Heart right ventricle (tissue), 16 donors: ENCODE measurements at regions of chrX and their contacts with region 1.

Region 1: DNA sequence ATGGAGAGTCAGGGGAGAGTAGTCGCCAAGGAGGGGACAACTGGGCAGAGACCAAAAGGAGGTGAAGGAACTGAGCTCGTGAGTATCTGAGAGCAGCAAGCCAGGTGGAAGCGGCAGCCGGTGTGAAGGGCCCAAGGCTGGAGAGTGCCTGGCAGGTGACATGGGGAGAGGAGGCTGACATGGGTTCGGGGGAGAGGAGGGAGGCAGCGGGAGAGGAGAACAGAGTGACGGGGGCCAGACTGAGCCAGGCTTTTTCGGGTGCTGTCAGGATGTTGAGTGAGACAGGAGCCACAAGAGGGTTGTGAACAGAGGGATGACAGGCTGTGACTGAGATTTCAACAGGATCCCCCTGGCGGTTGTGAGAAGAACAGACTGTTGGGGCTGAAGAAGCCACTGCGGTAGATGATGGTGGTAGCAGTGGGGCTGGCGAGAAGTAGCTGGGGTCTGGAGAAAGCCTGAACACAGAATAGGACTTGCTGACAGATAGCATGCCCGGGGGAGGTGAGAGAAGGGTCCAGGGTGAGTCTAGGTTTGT is 5.7 kb downstream of the ELK1 start:
- DNase-seq: no peak
- ATAC-seq: peak; percentile 42 to 88 (median 75)
- H3K4me3 ChIP-seq: no peak overlapping the region
- H3K27ac ChIP-seq: peak overlapping the region in 1 of 10 donors; percentile 22
- H3K4me1 ChIP-seq: peaks cover 0 to 32% (median 10%) of the 10 kb centered on the region in 9 donors
- H3K27me3 ChIP-seq: no peaks in the 10 kb centered on the region
- CTCF ChIP-seq: peak in 7 of 9 donors; percentile 29 to 51 (median 40)

Region 2: DNA sequence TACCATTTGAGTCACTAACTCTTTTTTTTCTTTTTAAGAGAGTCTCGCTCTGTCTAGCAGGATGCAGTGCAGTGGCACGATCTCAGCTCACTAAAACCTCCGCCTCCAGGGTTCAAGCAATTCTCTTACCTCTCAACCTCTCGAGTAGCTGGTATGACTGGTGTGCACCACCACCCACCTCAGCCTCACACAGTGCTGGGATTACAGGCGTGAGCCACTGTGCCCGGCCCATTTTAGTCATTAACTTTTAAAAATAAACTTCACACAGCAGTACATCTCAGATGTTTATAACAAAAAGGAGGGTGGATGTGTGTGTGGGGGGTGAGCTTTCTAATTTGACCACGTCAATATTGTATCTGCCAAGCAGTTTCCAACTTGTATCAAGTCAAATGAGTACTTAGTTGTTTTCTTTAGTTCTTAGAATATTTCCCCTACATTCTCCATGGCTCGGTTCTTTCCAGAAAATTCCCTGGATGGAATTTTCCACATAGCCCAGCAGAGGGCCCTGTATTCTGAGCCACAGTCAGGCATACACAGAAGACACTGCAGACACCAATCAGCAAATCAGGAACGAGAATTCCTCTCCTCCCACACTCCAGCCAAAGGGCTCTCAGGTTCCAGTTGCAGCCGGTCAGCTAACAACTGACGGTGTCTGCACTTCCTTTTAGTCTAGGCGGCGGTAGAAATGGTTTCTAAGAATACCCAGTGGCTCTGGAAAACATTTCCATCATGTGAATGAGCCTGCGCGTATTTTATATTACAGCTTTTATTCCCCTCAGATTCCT is 103.7 kb before region 1 on chrX:
- intact Hi-C with region 1: loop called in 3 of 10 experiments (anchors 2 to 5 kb)
- DNase-seq: peak; percentile 39 to 85
- ATAC-seq: peak; percentile 93 to 99 (median 99)
- H3K4me3 ChIP-seq: peak overlapping the region in 1 of 10 donors; percentile 12
- H3K27ac ChIP-seq: peak overlapping the region; percentile 34 to 86 (median 73)
- H3K4me1 ChIP-seq: peaks cover 0 to 25% (median 9%) of the 10 kb centered on the region in 9 donors
- H3K27me3 ChIP-seq: peaks cover 0 to 4% (median 0%) of the 10 kb centered on the region in 7 donors
- CTCF ChIP-seq: peak; percentile 22 to 72 (median 59)

Region 3: DNA sequence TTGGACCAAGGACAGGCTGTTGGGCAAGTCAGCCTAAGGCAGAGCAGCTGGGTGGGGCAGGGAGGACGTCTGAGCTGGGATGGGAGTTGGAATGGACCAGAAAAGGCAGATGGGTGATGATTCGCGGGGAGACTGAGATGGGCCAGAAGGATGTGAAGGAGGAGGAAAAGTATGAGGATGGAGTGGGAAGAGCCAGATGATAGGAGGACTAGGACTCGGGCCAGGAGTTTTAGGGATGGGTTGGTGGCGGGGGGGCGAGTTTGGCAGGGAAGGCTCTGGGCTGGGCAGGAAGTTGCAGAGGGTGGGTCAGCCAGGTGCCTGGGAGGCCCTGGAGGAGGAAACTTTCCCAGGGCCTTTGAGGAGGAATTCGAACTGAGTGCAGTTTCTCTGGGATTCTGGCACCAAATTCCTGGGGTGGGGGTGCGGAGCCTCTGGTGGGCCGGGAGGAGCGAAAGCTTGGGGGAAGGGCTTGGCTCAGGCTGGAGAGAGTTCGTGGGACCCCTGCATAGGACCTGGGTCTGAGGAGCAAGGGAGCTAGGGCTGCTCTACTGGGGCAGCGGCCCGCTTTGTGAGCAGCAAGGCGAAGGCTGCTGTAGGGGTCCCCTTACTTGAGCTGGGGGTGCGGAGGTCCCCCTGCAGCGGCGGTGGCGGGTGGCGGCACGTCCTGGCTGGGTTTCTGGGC is 71.1 kb before region 1 on chrX:
- intact Hi-C with region 1: loop called in 5 of 10 experiments (anchors 10 kb)
- DNase-seq: peak; percentile 55 to 58
- ATAC-seq: peak; percentile 20 to 80 (median 66)
- H3K4me3 ChIP-seq: peak overlapping the region in 9 of 10 donors; percentile 35 to 52 (median 47)
- H3K27ac ChIP-seq: peak overlapping the region; percentile 52 to 87 (median 80)
- H3K4me1 ChIP-seq: peaks cover 0 to 18% (median 5%) of the 10 kb centered on the region in 9 donors
- H3K27me3 ChIP-seq: peaks cover 0 to 22% (median 0%) of the 10 kb centered on the region in 7 donors
- CTCF ChIP-seq: no peak

Region 4: DNA sequence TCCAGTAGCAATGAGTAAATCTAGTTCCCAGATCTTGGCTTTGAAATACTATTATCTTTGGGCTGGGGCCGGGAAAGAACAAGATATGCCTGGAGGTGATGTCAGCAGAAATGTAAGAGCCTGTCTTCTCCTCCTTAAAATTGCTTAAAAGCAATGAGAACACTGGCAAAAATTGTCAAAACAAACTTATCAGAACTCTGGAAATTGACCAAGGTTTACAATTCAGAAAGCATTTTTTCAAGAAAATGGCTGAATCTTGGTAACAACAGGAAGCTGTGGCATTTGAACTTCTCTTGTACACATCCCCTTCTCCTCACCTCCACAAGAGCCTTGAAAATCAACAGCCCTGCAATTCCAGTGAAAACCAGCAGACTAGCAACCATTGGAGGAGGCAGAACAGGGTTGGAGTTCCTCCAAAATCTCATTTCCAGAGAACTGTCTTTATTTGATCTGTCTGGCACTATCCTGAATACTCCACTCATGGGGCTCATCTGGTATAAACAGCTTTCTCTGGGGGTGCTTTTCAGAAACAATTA is 48.8 kb before region 1 on chrX:
- intact Hi-C with region 1: no loop called
- DNase-seq: no peak
- ATAC-seq: peak in 6 of 8 donors; percentile 35 to 79 (median 56)
- H3K4me3 ChIP-seq: no peak overlapping the region
- H3K27ac ChIP-seq: peak overlapping the region in 3 of 10 donors; percentile 19 to 46 (median 21)
- H3K4me1 ChIP-seq: no peaks in the 10 kb centered on the region
- H3K27me3 ChIP-seq: peaks cover 0 to 4% (median 0%) of the 10 kb centered on the region in 7 donors
- CTCF ChIP-seq: no peak

Region 5: GRCh38 chrX:47807548-47807947 is 162.9 kb after region 1 on chrX:
- intact Hi-C with region 1: no loop called
- DNase-seq: no peak
- ATAC-seq: peak; percentile 25 to 78 (median 54)
- H3K4me3 ChIP-seq: no peak overlapping the region
- H3K27ac ChIP-seq: peak overlapping the region in 2 of 10 donors; percentile 34 to 39
- H3K4me1 ChIP-seq: no peaks in the 10 kb centered on the region
- H3K27me3 ChIP-seq: peaks cover 0 to 37% (median 0%) of the 10 kb centered on the region in 7 donors
- CTCF ChIP-seq: no peak